CD8-positive, alpha-beta T cell (primary cell): ENCODE measurements at regions of chr14 and their contacts with region 1.

Region 1: GRCh38 chr14:58427281-58428117 is at the starts of genes KIAA0586 and TIMM9:
- DNase-seq: peak; percentile 93 to 99 (median 94)
- ATAC-seq: peak; percentile 91
- H3K4me3 ChIP-seq: peak within 1 kb of the TSS; percentile 91 to 94
- H3K4me3 Mint-ChIP-seq: peak within 1 kb of the TSS; percentile 95
- H3K27ac ChIP-seq: peak within 1 kb of the TSS; percentile 96 to 98
- H3K27ac Mint-ChIP-seq: peak within 1 kb of the TSS; percentile 99
- H3K4me1 ChIP-seq: peaks cover 26% of the 10 kb centered on the region
- H3K4me1 Mint-ChIP-seq: peaks cover 50% of the 10 kb centered on the region
- H3K27me3 ChIP-seq: no peaks in the 10 kb centered on the region
- H3K27me3 Mint-ChIP-seq: no peaks in the 10 kb centered on the region
- CTCF ChIP-seq: no peak
- total RNA-seq, gene KIAA0586: 15.4 to 15.9 TPM
- total RNA-seq, gene TIMM9: 28.1 to 37.5 TPM

Region 2: DNA sequence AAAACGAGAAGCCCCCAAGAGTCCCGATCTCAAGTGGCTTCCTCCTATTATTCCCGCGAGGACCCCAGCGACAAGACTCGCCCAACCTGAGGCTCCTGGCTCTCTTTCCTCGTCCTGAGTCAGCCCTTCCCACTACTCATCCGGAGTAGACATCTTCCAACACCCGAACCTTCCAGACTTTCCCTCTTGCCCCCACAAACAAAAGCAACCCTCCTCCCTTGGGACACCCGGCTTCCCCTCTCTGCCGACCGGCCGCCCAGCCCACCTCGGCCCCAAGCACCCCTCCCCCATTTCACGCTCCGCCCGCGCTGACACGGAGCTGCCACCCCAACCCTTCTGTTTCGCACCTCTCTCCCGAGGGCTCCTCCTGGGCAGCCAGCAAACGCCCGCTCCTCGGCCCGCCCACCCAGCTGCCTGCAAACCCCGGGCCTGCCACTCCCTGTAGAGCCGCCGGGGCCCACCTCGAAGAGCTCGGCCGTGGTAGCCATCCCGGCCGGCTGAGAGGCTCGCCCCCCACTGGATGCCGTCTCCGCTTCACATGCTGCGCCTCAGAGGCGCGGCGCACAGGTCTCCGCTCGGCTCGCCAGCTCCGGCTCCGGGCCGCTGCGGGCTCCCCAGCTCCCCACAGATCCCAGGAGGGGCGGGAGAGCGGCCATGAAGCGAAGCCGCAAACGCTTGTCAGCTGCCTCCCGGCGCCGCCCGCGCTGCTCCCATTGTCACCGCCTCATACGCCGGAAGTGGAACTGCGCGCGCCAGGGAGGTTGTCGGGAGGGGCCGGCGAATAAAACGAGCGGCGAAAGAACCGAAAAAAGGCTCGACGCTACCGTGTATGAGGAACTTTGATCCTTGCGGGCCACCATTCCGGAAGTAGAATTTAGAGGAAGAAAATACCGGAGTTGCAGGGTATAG is 1159.1 kb before region 1 on chr14 and contains the starts of genes AP5M1 and EXOC5:
- CTCF ChIA-PET with region 1: no interaction called
- POLR2A ChIA-PET with region 1: interaction called, 5 read pairs
- intact Hi-C with region 1: loop called (anchors 2 to 10 kb)
- DNase-seq: peak; percentile 80 to 97 (median 91)
- ATAC-seq: peak; percentile 80
- H3K4me3 ChIP-seq: peak within 1 kb of the TSS; percentile 77 to 84
- H3K4me3 Mint-ChIP-seq: peak within 1 kb of the TSS; percentile 99
- H3K27ac ChIP-seq: peak within 1 kb of the TSS; percentile 85 to 90
- H3K27ac Mint-ChIP-seq: peak within 1 kb of the TSS; percentile 100
- H3K4me1 ChIP-seq: peaks cover 35% of the 10 kb centered on the region
- H3K4me1 Mint-ChIP-seq: peaks cover 70% of the 10 kb centered on the region
- H3K27me3 ChIP-seq: no peaks in the 10 kb centered on the region
- H3K27me3 Mint-ChIP-seq: no peaks in the 10 kb centered on the region
- CTCF ChIP-seq: no peak
- total RNA-seq, gene AP5M1: 38.5 to 42.4 TPM
- total RNA-seq, gene EXOC5: 17.0 to 17.8 TPM

Region 3: GRCh38 chr14:57390028-57390805 is 1037.3 kb before region 1 on chr14 and contains the start of gene NAA30:
- CTCF ChIA-PET with region 1: no interaction called
- POLR2A ChIA-PET with region 1: no interaction called
- intact Hi-C with region 1: loop called in 1 of 2 experiments (anchors 10 kb)
- DNase-seq: peak; percentile 82 to 97 (median 92)
- ATAC-seq: peak; percentile 93
- H3K4me3 ChIP-seq: peak within 1 kb of the TSS; percentile 46 to 83
- H3K4me3 Mint-ChIP-seq: peak within 1 kb of the TSS; percentile 94
- H3K27ac ChIP-seq: peak within 1 kb of the TSS; percentile 48 to 82
- H3K27ac Mint-ChIP-seq: peak within 1 kb of the TSS; percentile 94
- H3K4me1 ChIP-seq: peaks cover 27% of the 10 kb centered on the region
- H3K4me1 Mint-ChIP-seq: peaks cover 42% of the 10 kb centered on the region
- H3K27me3 ChIP-seq: no peaks in the 10 kb centered on the region
- H3K27me3 Mint-ChIP-seq: no peaks in the 10 kb centered on the region
- CTCF ChIP-seq: no peak
- total RNA-seq, gene NAA30: 26.4 to 31.2 TPM

Region 4: GRCh38 chr14:57660208-57660607 is 767.3 kb before region 1 on chr14:
- CTCF ChIA-PET with region 1: no interaction called
- POLR2A ChIA-PET with region 1: no interaction called
- intact Hi-C with region 1: no loop called
- DNase-seq: no peak
- ATAC-seq: no peak
- H3K4me3 ChIP-seq: no peak overlapping the region
- H3K4me3 Mint-ChIP-seq: no peak overlapping the region
- H3K27ac ChIP-seq: no peak overlapping the region
- H3K27ac Mint-ChIP-seq: no peak overlapping the region
- H3K4me1 ChIP-seq: no peaks in the 10 kb centered on the region
- H3K4me1 Mint-ChIP-seq: no peaks in the 10 kb centered on the region
- H3K27me3 ChIP-seq: no peaks in the 10 kb centered on the region
- H3K27me3 Mint-ChIP-seq: peaks cover 4% of the 10 kb centered on the region
- CTCF ChIP-seq: no peak

Region 5: GRCh38 chr14:58239244-58240195 is 188.0 kb before region 1 on chr14:
- CTCF ChIA-PET with region 1: no interaction called
- POLR2A ChIA-PET with region 1: interaction called, 11 read pairs
- intact Hi-C with region 1: loop called (anchors 1 to 2 kb)
- DNase-seq: peak; percentile 63 to 91 (median 83)
- ATAC-seq: peak; percentile 24
- H3K4me3 ChIP-seq: peak overlapping the region; percentile 57 to 81
- H3K4me3 Mint-ChIP-seq: no peak overlapping the region
- H3K27ac ChIP-seq: peak overlapping the region; percentile 59 to 77
- H3K27ac Mint-ChIP-seq: no peak overlapping the region
- H3K4me1 ChIP-seq: peaks cover 10% of the 10 kb centered on the region
- H3K4me1 Mint-ChIP-seq: peaks cover 22% of the 10 kb centered on the region
- H3K27me3 ChIP-seq: no peaks in the 10 kb centered on the region
- H3K27me3 Mint-ChIP-seq: no peaks in the 10 kb centered on the region
- CTCF ChIP-seq: no peak

Region 6: GRCh38 chr14:58331111-58331510 is 96.4 kb before region 1 on chr14:
- CTCF ChIA-PET with region 1: interaction called, 3 read pairs
- POLR2A ChIA-PET with region 1: no interaction called
- intact Hi-C with region 1: loop called in 1 of 2 experiments (anchors 1 kb)
- DNase-seq: peak; percentile 78 to 99 (median 92)
- ATAC-seq: peak; percentile 97
- H3K4me3 ChIP-seq: no peak overlapping the region
- H3K4me3 Mint-ChIP-seq: peak overlapping the region; percentile 30
- H3K27ac ChIP-seq: peak overlapping the region; percentile 51 to 63
- H3K27ac Mint-ChIP-seq: peak overlapping the region; percentile 89
- H3K4me1 ChIP-seq: peaks cover 10% of the 10 kb centered on the region
- H3K4me1 Mint-ChIP-seq: peaks cover 24% of the 10 kb centered on the region
- H3K27me3 ChIP-seq: no peaks in the 10 kb centered on the region
- H3K27me3 Mint-ChIP-seq: no peaks in the 10 kb centered on the region
- CTCF ChIP-seq: no peak

Region 7: GRCh38 chr14:59116984-59117415 is 689.5 kb after region 1 on chr14:
- CTCF ChIA-PET with region 1: no interaction called
- POLR2A ChIA-PET with region 1: no interaction called
- intact Hi-C with region 1: no loop called
- DNase-seq: no peak
- ATAC-seq: no peak
- H3K4me3 ChIP-seq: no peak overlapping the region
- H3K4me3 Mint-ChIP-seq: no peak overlapping the region
- H3K27ac ChIP-seq: no peak overlapping the region
- H3K27ac Mint-ChIP-seq: no peak overlapping the region
- H3K4me1 ChIP-seq: no peaks in the 10 kb centered on the region
- H3K4me1 Mint-ChIP-seq: no peaks in the 10 kb centered on the region
- H3K27me3 ChIP-seq: no peaks in the 10 kb centered on the region
- H3K27me3 Mint-ChIP-seq: peaks cover 3% of the 10 kb centered on the region
- CTCF ChIP-seq: no peak

Region 8: DNA sequence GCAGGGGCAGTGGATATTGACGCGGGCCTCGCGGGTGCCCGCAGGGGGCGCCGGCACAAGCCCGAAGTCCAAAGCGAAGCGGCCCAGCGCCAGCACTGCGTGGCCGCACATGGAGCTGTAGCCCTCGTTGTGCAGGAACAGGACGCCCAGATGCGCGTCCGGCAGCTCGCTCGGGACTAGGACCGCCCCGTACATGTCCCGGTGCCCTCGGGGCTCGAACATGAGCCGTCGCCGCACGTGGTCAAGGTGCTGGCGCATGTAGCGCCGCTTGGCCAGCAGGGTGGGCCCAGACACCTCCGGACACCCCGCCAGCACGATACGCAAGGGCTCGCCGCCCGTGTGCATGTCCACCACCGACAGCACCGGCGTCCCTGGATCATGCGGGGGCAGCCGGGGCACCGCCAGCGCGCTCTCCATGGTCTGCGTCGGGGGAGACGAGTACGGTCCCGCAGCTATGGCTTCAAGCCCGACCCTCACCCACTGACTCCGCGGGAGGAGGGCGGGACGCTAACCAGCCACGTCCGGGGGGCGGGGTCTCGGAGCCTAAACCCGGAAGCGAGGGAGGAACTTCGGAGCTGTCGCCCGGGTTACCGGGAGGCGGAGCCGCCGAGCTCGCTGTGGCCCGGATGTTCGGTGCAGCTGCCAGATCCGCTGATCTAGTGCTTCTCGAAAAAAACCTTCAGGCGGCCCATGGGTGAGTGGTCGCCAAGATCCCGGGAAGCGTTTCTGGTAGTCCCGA is 1056.6 kb after region 1 on chr14 and contains the starts of genes JKAMP and L3HYPDH:
- CTCF ChIA-PET with region 1: no interaction called
- POLR2A ChIA-PET with region 1: interaction called, 9 read pairs
- intact Hi-C with region 1: loop called in 1 of 2 experiments (anchors 2 kb)
- DNase-seq: peak; percentile 93 to 99 (median 97)
- ATAC-seq: peak; percentile 95
- H3K4me3 ChIP-seq: peak within 1 kb of the TSS; percentile 94 to 99
- H3K4me3 Mint-ChIP-seq: peak within 1 kb of the TSS; percentile 96
- H3K27ac ChIP-seq: peak within 1 kb of the TSS; percentile 77 to 89
- H3K27ac Mint-ChIP-seq: peak within 1 kb of the TSS; percentile 88
- H3K4me1 ChIP-seq: peaks cover 46% of the 10 kb centered on the region
- H3K4me1 Mint-ChIP-seq: peaks cover 76% of the 10 kb centered on the region
- H3K27me3 ChIP-seq: no peaks in the 10 kb centered on the region
- H3K27me3 Mint-ChIP-seq: no peaks in the 10 kb centered on the region
- CTCF ChIP-seq: no peak
- total RNA-seq, gene JKAMP: 9.1 to 10.5 TPM
- total RNA-seq, gene L3HYPDH: 8.4 to 8.7 TPM